ENCODE measurements at regions of chr6 and their contacts with region 1.

Region 1: GRCh38 chr6:21246075-21246474 is 347.5 kb upstream of the SOX4 start:
- DNase-seq: no peak
- ATAC-seq: no peak
- H3K4me3 ChIP-seq: no peak overlapping the region
- H3K27ac ChIP-seq: no peak overlapping the region
- H3K4me1 ChIP-seq: no peaks in the 10 kb centered on the region
- H3K27me3 ChIP-seq: no peaks in the 10 kb centered on the region
- CTCF ChIP-seq: no peak

Region 2: DNA sequence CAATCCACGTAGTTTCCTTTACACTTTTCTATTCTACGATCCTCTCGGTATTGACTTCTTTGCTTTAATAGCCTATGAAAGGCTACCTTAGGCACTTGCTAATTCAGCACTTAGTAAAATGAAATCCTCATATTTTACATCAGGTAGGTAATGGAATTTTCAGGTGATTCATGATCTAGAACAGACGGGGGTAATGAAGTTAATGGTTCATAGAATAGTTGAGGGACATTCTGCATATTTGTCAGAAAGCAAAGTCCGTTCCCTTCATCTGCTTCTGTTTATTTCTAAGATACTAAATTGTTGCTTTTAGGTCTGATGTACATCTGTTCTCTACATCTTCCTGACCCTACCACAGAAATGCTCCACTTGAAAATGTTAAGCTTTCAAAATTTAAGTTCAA is 280.2 kb before region 1 on chr6:
- CTCF ChIA-PET with region 1: no interaction called
- POLR2A ChIA-PET with region 1: no interaction called
- intact Hi-C with region 1: no loop called
- DNase-seq: no peak
- ATAC-seq: no peak
- H3K4me3 ChIP-seq: no peak overlapping the region
- H3K27ac ChIP-seq: no peak overlapping the region
- H3K4me1 ChIP-seq: no peaks in the 10 kb centered on the region
- H3K27me3 ChIP-seq: no peaks in the 10 kb centered on the region
- CTCF ChIP-seq: no peak

Region 3: GRCh38 chr6:21132856-21133838 is 112.9 kb before region 1 on chr6:
- CTCF ChIA-PET with region 1: no interaction called
- POLR2A ChIA-PET with region 1: no interaction called
- intact Hi-C with region 1: no loop called
- DNase-seq: no peak
- ATAC-seq: no peak
- H3K4me3 ChIP-seq: no peak overlapping the region
- H3K27ac ChIP-seq: no peak overlapping the region
- H3K4me1 ChIP-seq: no peaks in the 10 kb centered on the region; the same call in 1 of the 2 replicates
- H3K27me3 ChIP-seq: no peaks in the 10 kb centered on the region
- CTCF ChIP-seq: no peak

Region 4: GRCh38 chr6:21500314-21501020 is 254.4 kb after region 1 on chr6:
- CTCF ChIA-PET with region 1: no interaction called
- POLR2A ChIA-PET with region 1: interaction called, 10 read pairs
- intact Hi-C with region 1: no loop called
- DNase-seq: no peak
- ATAC-seq: no peak
- H3K4me3 ChIP-seq: no peak overlapping the region
- H3K27ac ChIP-seq: no peak overlapping the region
- H3K4me1 ChIP-seq: no peaks in the 10 kb centered on the region
- H3K27me3 ChIP-seq: no peaks in the 10 kb centered on the region
- CTCF ChIP-seq: no peak